Ascending aorta (tissue), 2 donors: ENCODE measurements at regions of chr2 and their contacts with region 1.

Region 1: DNA sequence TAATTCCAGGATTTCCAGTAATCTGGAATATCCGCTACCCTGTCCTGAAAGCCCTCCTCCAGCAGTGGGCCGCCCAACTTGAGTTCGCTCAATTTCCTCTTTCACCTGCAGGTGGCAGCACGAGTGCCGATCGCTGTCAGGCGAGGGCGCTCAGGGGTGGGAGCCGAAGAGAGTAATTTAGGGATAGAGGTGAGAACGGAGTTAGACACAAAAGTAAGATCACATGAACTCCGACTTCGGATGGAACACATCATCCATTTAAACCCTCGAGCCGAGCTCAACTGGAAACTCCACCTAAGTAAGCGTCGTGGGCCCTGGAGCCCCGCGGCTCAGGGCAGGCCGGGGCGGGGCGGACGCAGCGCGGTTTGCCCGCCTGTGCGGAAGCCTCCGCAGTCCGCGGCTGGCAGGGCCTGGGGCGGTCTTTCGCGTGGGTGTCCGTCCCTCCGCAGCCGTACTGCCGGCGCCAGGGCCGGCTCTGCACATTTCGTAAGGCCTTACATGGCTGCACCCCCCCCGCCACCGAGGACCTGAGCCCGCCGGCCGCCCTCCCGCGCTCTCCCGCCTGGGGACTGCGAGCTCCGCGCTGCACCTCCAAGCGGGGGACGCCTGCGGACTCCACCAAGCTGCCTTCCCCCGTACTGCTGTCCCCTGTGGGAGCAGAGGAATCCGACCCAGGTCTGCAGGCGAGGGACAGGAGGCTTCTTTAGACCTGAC is 61.2 kb downstream of the SEMA4F start:
- DNase-seq: peak; percentile 35 to 92
- H3K4me3 ChIP-seq: peak overlapping the region; percentile 54 to 79
- H3K27ac ChIP-seq: peak overlapping the region in 1 of 2 donors; percentile 83
- H3K4me1 ChIP-seq: peaks cover 0 to 3% of the 10 kb centered on the region in 2 donors
- H3K27me3 ChIP-seq: no peaks in the 10 kb centered on the region
- CTCF ChIP-seq: peak; percentile 87 to 96 (median 89)

Region 2: DNA sequence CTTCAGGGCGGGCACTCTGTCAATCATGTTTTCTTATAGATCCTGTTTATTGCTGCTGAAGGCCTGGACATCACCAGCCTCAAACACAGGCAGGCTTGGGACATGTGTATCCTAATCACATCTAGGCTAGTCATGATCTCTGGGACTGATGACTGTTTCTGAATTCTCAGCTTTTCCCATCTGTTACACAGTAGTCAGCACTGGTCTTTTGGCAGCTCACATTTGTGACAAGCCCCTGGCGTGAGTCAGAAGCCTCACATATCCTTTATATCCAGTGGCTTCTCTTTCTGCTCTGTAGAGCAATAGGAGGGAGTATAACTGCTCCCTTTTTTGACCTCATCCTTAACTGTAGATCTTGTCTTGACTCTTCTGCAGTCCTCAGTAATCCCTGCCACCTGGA is 56.7 kb before region 1 on chr2:
- intact Hi-C with region 1: no loop called
- DNase-seq: no peak
- H3K4me3 ChIP-seq: no peak overlapping the region
- H3K27ac ChIP-seq: no peak overlapping the region
- H3K4me1 ChIP-seq: no peaks in the 10 kb centered on the region
- H3K27me3 ChIP-seq: no peaks in the 10 kb centered on the region
- CTCF ChIP-seq: no peak

Region 3: DNA sequence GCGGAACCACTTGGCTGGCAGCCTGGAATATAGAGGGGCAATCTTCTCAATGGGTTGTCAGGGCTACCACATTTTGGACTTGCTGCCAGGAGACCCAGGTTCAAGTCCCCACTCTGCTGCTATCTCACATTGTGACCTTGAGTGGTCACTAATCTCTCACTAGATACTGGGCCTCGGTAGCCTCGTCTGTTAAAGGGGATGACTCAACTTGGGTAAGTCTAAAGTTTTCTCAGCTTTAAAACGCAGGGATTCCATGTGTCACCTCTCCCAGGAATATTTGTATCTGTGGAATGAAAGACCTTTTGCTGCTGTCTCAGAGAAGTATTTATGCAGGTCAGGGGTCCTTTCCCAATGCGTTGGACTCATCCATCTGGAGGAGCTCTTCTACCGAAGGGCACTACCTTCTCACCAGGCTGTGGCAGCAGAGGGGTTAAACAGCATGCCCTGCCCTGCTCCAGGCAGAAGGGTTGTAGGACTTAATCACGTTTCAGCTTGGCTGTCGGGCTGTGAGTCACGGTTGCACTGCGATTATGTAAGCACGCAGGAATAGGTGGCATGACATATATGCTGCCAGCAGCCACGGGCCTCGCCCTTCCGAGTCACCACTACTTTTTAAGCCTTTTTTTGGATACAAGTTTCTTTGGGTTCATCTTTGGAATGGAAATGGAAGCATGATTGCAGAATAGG is 25.3 kb after region 1 on chr2:
- intact Hi-C with region 1: loop called (anchors 2 kb)
- DNase-seq: peak; percentile 70 to 92
- H3K4me3 ChIP-seq: peak overlapping the region in 1 of 2 donors; percentile 17
- H3K27ac ChIP-seq: peak overlapping the region; percentile 70 to 75
- H3K4me1 ChIP-seq: peaks cover 0 to 12% of the 10 kb centered on the region in 2 donors
- H3K27me3 ChIP-seq: no peaks in the 10 kb centered on the region
- CTCF ChIP-seq: no peak

Region 4: DNA sequence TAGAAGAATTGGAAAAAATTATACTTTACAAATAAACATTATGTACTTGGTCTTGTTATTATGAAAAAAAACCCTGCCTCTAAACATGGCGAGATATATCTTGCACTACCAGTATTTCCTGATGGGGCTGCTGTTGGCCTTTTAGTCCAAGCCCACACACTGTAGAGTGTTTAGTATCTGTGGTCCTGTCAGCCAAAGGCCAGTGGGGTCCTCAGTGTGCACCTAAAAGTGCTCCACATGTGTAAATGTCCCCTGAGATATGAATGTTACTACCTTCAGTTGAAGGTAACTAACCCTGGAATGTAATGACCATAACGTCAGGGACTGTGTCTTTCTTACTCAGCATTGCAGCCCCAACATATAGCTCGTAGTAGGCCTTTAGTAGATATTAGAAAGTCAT is 47.6 kb after region 1 on chr2:
- intact Hi-C with region 1: no loop called
- DNase-seq: no peak
- H3K4me3 ChIP-seq: no peak overlapping the region
- H3K27ac ChIP-seq: no peak overlapping the region
- H3K4me1 ChIP-seq: peaks cover 0 to 3% of the 10 kb centered on the region in 2 donors
- H3K27me3 ChIP-seq: no peaks in the 10 kb centered on the region
- CTCF ChIP-seq: no peak

Region 5: GRCh38 chr2:74876081-74876886 is 161.0 kb after region 1 on chr2:
- intact Hi-C with region 1: loop called (anchors 1 kb)
- DNase-seq: no peak
- H3K4me3 ChIP-seq: no peak overlapping the region
- H3K27ac ChIP-seq: peak overlapping the region in 1 of 2 donors; percentile 24
- H3K4me1 ChIP-seq: no peaks in the 10 kb centered on the region
- H3K27me3 ChIP-seq: no peaks in the 10 kb centered on the region
- CTCF ChIP-seq: peak; percentile 54 to 79 (median 59)

Region 6: GRCh38 chr2:74958274-74959105 is 243.3 kb after region 1 on chr2 and contains the start of gene POLE4:
- intact Hi-C with region 1: loop called (anchors 1 kb)
- DNase-seq: peak; percentile 61 to 95
- H3K4me3 ChIP-seq: peak within 1 kb of the TSS; percentile 65 to 79
- H3K27ac ChIP-seq: peak within 1 kb of the TSS; percentile 85 to 91
- H3K4me1 ChIP-seq: peaks cover 3 to 5% of the 10 kb centered on the region in 2 donors
- H3K27me3 ChIP-seq: no peaks in the 10 kb centered on the region
- CTCF ChIP-seq: no peak
- total RNA-seq, gene POLE4: 57.5 TPM

Region 7: GRCh38 chr2:75390169-75390568 is 674.9 kb after region 1 on chr2:
- intact Hi-C with region 1: no loop called
- DNase-seq: no peak
- H3K4me3 ChIP-seq: no peak overlapping the region
- H3K27ac ChIP-seq: no peak overlapping the region
- H3K4me1 ChIP-seq: no peaks in the 10 kb centered on the region
- H3K27me3 ChIP-seq: no peaks in the 10 kb centered on the region
- CTCF ChIP-seq: no peak